B cell (primary cell): ENCODE measurements at regions of chr17 and their contacts with region 1.

Region 1: DNA sequence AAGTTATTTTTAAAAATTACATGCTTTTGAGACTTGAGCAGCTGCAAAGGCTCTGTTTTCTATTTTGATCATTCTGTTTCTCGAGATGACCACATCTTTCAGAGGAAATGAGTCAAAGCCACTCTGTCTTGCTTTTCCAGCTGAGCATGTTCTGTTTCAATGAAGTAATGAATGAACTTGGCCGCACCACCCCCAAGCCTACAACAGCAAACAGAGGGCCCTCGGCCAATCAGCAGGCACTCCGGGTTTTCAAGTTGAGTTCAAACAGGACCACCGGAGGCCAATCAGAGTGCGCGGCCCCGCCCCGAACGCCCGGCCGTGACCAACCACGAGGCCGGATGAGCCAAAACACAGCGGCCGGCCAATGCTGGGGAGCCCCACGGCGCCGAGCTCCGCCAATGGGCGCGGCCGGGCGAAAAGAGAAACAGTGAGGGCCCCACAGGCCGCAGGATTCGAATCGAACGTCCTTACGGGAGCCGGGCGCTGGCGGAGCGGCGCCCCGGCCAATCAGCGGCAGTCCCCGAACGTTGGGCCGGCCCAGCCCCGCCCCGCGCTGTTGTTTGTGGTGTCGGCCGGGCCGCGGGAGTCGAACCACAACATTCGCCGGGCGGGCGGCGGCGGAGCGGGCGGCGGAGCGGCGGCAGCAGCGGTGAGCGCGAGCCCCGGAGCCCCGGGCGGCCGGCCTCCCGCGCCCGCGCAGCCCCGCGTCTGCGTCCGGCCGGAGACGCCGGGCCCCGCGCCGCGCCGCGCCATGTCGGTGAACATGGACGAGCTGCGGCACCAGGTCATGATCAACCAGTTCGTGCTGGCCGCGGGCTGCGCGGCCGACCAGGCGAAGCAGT is at the start of gene UBALD2:
- DNase-seq: peak; percentile 99
- ATAC-seq: peak; percentile 80
- H3K4me3 ChIP-seq: peak within 1 kb of the TSS; percentile 61 to 91 (median 88)
- H3K4me3 Mint-ChIP-seq: peak within 1 kb of the TSS; percentile 94
- H3K27ac ChIP-seq: peak within 1 kb of the TSS; percentile 77 to 94
- H3K27ac Mint-ChIP-seq: peak within 1 kb of the TSS; percentile 96
- H3K4me1 ChIP-seq: peaks cover 82 to 87% of the 10 kb centered on the region in 2 donors
- H3K4me1 Mint-ChIP-seq: peaks cover 74% of the 10 kb centered on the region
- H3K27me3 ChIP-seq: no peaks in the 10 kb centered on the region
- H3K27me3 Mint-ChIP-seq: no peaks in the 10 kb centered on the region
- CTCF ChIP-seq: no peak
- total RNA-seq, gene UBALD2: 78.9 and 84.8 TPM in 2 replicates

Region 2: DNA sequence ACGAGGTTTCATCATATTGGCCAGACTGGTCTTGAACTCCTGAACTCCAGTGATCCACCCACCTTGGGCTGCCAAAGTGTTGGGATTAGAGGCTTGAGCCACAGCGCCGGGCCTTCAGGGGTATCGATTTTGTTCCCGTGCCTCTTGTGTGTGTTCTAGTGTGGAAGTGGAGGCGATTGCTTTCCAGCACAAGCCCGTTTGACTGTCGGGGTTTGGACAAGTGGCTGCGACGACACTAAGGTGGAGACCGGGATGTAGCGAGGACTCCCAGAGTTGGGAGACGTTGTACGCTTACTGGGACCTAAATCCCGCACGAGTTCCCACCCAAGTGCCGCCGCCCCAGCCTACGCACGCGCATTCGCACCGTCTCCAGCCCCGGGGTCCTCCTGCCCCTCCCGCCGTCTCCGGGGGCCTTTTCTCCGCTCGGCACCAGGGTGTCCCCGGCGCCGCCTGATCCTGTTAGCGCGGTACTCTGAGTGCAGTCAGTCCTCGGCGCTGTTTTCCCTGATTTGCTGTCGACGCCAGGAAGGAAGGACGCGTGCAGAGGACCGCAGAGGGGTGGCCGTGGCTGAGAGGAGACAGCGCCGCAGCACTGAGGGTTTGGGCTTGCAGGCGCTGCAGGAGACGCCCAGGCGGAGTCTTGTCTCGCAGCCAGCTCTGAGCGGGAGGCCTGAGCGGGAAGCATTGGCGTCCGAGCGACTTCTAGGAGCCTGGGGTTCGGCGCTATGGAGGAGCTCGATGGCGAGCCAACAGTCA is 1059.8 kb before region 1 on chr17 and contains the start of gene NUP85:
- CTCF ChIA-PET with region 1: no interaction called
- POLR2A ChIA-PET with region 1: no interaction called
- intact Hi-C with region 1: no loop called
- DNase-seq: peak; percentile 97
- ATAC-seq: peak; percentile 90
- H3K4me3 ChIP-seq: peak within 1 kb of the TSS; percentile 67 to 98 (median 92)
- H3K4me3 Mint-ChIP-seq: peak within 1 kb of the TSS; percentile 99
- H3K27ac ChIP-seq: peak within 1 kb of the TSS; percentile 83 to 85
- H3K27ac Mint-ChIP-seq: peak within 1 kb of the TSS; percentile 100
- H3K4me1 ChIP-seq: peaks cover 9 to 21% of the 10 kb centered on the region in 2 donors
- H3K4me1 Mint-ChIP-seq: peaks cover 26% of the 10 kb centered on the region
- H3K27me3 ChIP-seq: no peaks in the 10 kb centered on the region
- H3K27me3 Mint-ChIP-seq: no peaks in the 10 kb centered on the region
- CTCF ChIP-seq: no peak
- total RNA-seq, gene NUP85: 128 and 142 TPM in 2 replicates

Region 3: DNA sequence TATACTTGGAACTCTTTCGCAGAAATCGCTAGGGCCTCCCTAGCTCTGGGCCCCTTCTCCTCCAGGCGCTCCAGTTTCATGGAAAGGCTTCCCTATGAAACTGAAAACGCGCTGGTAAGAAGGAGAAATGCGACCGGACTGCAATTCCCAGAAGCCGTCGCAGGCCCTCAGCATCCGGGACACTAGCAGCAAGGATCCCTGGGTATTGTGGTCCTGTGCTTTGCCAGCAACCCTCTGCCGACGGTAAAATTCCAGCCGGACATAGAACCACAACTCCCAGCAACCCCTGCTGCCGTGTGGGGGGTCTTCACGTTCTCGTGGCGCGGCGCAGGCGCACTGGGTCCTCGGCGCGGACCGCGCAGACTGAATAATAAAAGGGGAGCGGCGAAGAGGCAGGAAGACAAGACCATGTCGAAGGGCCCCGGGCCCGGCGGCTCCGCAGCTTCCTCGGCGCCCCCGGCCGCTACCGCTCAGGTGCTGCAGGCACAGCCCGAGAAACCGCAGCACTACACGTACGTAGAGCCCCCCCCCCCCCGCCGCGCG is 480.4 kb before region 1 on chr17 and contains the start of gene UNK:
- CTCF ChIA-PET with region 1: no interaction called
- POLR2A ChIA-PET with region 1: interaction called, 6 read pairs
- intact Hi-C with region 1: loop called (anchors 2 kb)
- DNase-seq: peak; percentile 99
- ATAC-seq: peak; percentile 75
- H3K4me3 ChIP-seq: peak within 1 kb of the TSS; percentile 75 to 83 (median 81)
- H3K4me3 Mint-ChIP-seq: peak within 1 kb of the TSS; percentile 96
- H3K27ac ChIP-seq: peak within 1 kb of the TSS; percentile 100
- H3K27ac Mint-ChIP-seq: peak within 1 kb of the TSS; percentile 100
- H3K4me1 ChIP-seq: peaks cover 42 to 49% of the 10 kb centered on the region in 2 donors
- H3K4me1 Mint-ChIP-seq: peaks cover 53% of the 10 kb centered on the region
- H3K27me3 ChIP-seq: no peaks in the 10 kb centered on the region
- H3K27me3 Mint-ChIP-seq: no peaks in the 10 kb centered on the region
- CTCF ChIP-seq: no peak
- total RNA-seq, gene UNK: 70.3 and 82.3 TPM in 2 replicates

Region 4: GRCh38 chr17:76036497-76037261 is 228.3 kb before region 1 on chr17:
- CTCF ChIA-PET with region 1: no interaction called
- POLR2A ChIA-PET with region 1: no interaction called
- intact Hi-C with region 1: no loop called
- DNase-seq: no peak
- ATAC-seq: no peak
- H3K4me3 ChIP-seq: no peak overlapping the region
- H3K4me3 Mint-ChIP-seq: no peak overlapping the region
- H3K27ac ChIP-seq: no peak overlapping the region
- H3K27ac Mint-ChIP-seq: no peak overlapping the region
- H3K4me1 ChIP-seq: no peaks in the 10 kb centered on the region
- H3K4me1 Mint-ChIP-seq: no peaks in the 10 kb centered on the region
- H3K27me3 ChIP-seq: no peaks in the 10 kb centered on the region
- H3K27me3 Mint-ChIP-seq: no peaks in the 10 kb centered on the region
- CTCF ChIP-seq: no peak

Region 5: GRCh38 chr17:76121932-76122430 is 143.0 kb before region 1 on chr17:
- CTCF ChIA-PET with region 1: interaction called, 435 read pairs
- POLR2A ChIA-PET with region 1: interaction called, 4 read pairs
- intact Hi-C with region 1: no loop called
- DNase-seq: peak; percentile 49
- ATAC-seq: peak; percentile 11
- H3K4me3 ChIP-seq: peak overlapping the region in 4 of 5 experiments; percentile 32 to 66 (median 50)
- H3K4me3 Mint-ChIP-seq: peak overlapping the region; percentile 71
- H3K27ac ChIP-seq: no peak overlapping the region
- H3K27ac Mint-ChIP-seq: peak overlapping the region; percentile 53
- H3K4me1 ChIP-seq: peaks cover 18 to 21% of the 10 kb centered on the region in 2 donors
- H3K4me1 Mint-ChIP-seq: peaks cover 16% of the 10 kb centered on the region
- H3K27me3 ChIP-seq: peaks cover 0 to 6% (median 0%) of the 10 kb centered on the region in 4 experiments
- H3K27me3 Mint-ChIP-seq: peaks cover 2% of the 10 kb centered on the region
- CTCF ChIP-seq: no peak

Region 6: DNA sequence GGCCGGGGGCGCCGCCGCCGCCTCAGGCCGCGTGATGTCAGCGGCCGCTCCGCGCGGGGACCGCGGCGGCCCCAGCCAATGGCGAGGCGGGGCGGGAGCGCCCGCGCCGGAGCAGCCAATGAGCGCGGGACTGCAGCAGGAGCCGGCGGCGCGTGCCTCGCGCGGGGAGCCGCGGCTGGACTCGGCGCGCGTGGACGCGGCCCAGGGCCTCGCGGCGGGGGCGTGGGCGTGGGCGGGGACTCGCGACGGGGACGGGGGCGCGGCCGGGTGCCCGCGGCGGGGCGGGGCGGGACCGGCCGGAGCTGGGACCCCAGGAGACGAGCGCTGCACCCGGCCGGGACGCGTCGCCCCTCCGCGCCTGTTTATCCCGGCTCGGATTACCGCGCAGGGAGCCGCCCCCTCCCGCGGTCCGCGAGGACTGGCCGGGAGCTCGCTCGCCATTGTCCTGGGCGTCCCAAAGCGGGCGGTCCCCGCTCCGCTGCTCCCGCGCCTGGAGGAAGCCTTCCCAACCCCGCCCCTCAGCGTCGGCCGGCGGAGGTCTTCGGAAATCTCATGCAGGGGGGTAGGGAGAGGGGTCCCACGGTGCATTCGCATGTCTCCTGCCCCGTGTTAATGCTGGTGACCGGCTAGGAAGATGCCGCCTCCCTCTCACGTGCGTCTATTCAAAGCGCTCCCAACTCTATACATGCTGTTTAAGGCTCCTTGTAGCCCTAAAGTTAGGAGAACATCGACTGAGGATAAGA is 24.3 kb before region 1 on chr17 and contains the start of gene RNF157:
- CTCF ChIA-PET with region 1: interaction called, 15 read pairs
- POLR2A ChIA-PET with region 1: interaction called, 7 read pairs
- intact Hi-C with region 1: loop called (anchors 1 kb)
- DNase-seq: peak; percentile 66
- ATAC-seq: peak; percentile 90
- H3K4me3 ChIP-seq: peak within 1 kb of the TSS; percentile 46 to 66 (median 61)
- H3K4me3 Mint-ChIP-seq: peak within 1 kb of the TSS; percentile 88
- H3K27ac ChIP-seq: no peak within 1 kb of the TSS
- H3K27ac Mint-ChIP-seq: peak within 1 kb of the TSS; percentile 70
- H3K4me1 ChIP-seq: peaks cover 16 to 21% of the 10 kb centered on the region in 2 donors
- H3K4me1 Mint-ChIP-seq: peaks cover 11% of the 10 kb centered on the region
- H3K27me3 ChIP-seq: peaks cover 0 to 46% (median 26%) of the 10 kb centered on the region in 4 experiments
- H3K27me3 Mint-ChIP-seq: peaks cover 38% of the 10 kb centered on the region
- CTCF ChIP-seq: no peak
- total RNA-seq, gene RNF157: 1.2 and 1.4 TPM in 2 replicates

Region 7: DNA sequence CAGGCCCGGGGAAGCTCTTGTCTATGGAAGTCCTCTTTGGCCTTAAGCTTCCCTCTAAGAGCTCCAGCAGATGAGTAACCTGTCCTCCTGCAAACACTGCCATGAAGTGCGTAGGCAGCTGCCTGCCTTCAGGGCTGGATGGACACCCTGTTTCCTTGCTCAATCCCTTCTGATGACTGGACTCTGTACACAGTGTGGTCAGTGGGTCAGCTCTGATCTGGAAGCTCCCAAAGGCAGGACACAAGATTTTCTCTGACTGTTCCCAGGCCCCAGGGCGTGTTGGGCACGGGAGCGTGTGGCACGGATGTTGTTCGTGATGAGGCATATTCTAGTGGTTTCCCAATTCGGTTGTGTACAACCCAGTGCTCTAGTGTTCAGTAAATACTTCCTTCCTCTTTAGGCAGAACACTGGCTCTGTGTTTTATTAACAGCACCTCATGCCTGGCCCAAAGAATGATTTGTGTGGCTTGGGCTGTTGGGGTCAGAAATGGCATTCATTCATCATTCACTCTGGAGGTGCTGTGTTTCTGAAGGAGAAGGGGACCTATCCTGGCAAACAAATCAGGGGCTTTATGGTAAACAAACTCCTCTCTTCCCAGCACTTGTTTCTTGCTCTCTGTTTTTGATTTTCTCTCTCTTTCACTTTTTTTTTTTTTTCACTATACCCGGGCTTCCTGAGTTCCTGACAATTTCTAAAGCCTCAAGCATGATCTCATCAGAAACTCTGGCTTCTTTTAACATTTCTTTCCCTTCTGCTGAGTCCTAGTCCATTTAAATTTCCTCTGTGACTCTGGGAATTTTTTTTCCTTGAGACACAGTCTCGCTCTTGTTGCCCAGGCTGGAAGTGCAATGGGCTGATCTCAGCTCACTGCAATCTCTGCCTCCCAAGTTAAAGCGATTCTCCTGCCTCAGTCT is 12.7 kb before region 1 on chr17:
- CTCF ChIA-PET with region 1: interaction called, 15 read pairs
- POLR2A ChIA-PET with region 1: interaction called, 6 read pairs
- intact Hi-C with region 1: loop called (anchors 1 kb)
- DNase-seq: peak; percentile 75
- ATAC-seq: peak; percentile 90
- H3K4me3 ChIP-seq: peak overlapping the region in 2 of 5 experiments; percentile 34 to 48
- H3K4me3 Mint-ChIP-seq: peak overlapping the region; percentile 81
- H3K27ac ChIP-seq: peak overlapping the region; percentile 2 to 45
- H3K27ac Mint-ChIP-seq: peak overlapping the region; percentile 89
- H3K4me1 ChIP-seq: peaks cover 23 to 24% of the 10 kb centered on the region in 2 donors
- H3K4me1 Mint-ChIP-seq: peaks cover 32% of the 10 kb centered on the region
- H3K27me3 ChIP-seq: no peaks in the 10 kb centered on the region
- H3K27me3 Mint-ChIP-seq: no peaks in the 10 kb centered on the region
- CTCF ChIP-seq: no peak

Region 8: DNA sequence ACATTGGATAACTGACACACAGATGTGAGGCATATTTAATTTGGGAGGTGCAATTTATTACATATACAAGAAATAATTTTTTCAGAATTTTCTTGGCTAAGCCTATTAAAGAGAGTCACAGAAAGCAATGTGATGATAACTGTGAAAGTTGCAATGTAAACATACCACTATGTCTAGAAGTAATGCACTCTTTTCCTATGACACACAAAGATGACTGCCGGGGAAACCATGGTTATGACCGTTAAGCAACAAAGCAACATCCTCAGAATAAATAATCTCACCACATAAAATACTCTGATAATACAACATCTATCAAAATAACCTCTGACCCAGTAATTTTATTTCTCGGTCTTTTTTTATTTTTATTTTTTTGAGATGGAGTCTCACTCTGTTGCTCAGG is 53.6 kb after region 1 on chr17:
- CTCF ChIA-PET with region 1: no interaction called
- POLR2A ChIA-PET with region 1: no interaction called
- intact Hi-C with region 1: no loop called
- DNase-seq: no peak
- ATAC-seq: no peak
- H3K4me3 ChIP-seq: no peak overlapping the region
- H3K4me3 Mint-ChIP-seq: no peak overlapping the region
- H3K27ac ChIP-seq: no peak overlapping the region
- H3K27ac Mint-ChIP-seq: no peak overlapping the region
- H3K4me1 ChIP-seq: no peaks in the 10 kb centered on the region
- H3K4me1 Mint-ChIP-seq: no peaks in the 10 kb centered on the region
- H3K27me3 ChIP-seq: no peaks in the 10 kb centered on the region
- H3K27me3 Mint-ChIP-seq: no peaks in the 10 kb centered on the region
- CTCF ChIP-seq: no peak

Region 9: GRCh38 chr17:77444984-77445759 is 1180.2 kb after region 1 on chr17:
- CTCF ChIA-PET with region 1: no interaction called
- POLR2A ChIA-PET with region 1: no interaction called
- intact Hi-C with region 1: loop called (anchors 5 kb)
- DNase-seq: peak; percentile 95
- ATAC-seq: peak; percentile 50
- H3K4me3 ChIP-seq: peak overlapping the region in 4 of 5 experiments; percentile 32 to 54 (median 49)
- H3K4me3 Mint-ChIP-seq: peak overlapping the region; percentile 79
- H3K27ac ChIP-seq: peak overlapping the region; percentile 96 to 100
- H3K27ac Mint-ChIP-seq: peak overlapping the region; percentile 98
- H3K4me1 ChIP-seq: peaks cover 89 to 100% of the 10 kb centered on the region in 2 donors
- H3K4me1 Mint-ChIP-seq: peaks cover 87% of the 10 kb centered on the region
- H3K27me3 ChIP-seq: no peaks in the 10 kb centered on the region
- H3K27me3 Mint-ChIP-seq: no peaks in the 10 kb centered on the region
- CTCF ChIP-seq: no peak